ENCODE measurements at regions of chr21 and their contacts with region 1.

Region 1: DNA sequence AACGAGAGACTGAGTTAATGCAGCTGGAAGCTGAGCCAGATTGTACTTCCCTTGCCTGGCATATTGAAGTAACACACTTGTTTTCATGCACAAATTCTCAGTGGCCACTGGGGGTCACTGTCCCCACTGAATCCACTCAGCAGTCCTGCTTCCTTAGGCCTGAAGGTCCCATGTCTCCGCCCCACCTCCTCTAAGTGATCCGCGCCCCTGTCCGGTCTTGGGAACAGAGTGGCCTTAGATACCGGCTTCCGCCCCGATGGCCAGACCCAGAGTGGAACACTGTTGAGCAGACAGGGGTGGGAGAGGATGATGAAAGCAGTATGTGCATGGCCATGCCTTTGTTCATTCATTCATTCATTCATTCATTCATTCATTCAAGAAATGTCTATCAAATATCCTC is 34.8 kb downstream of the CHAF1B start:
- DNase-seq: peak; percentile 90
- H3K4me3 ChIP-seq: no peak overlapping the region
- H3K27ac ChIP-seq: peak overlapping the region; percentile 52
- H3K4me1 ChIP-seq: peaks cover 27% of the 10 kb centered on the region
- H3K27me3 ChIP-seq: no peaks in the 10 kb centered on the region
- CTCF ChIP-seq: peak; percentile 86

Region 2: DNA sequence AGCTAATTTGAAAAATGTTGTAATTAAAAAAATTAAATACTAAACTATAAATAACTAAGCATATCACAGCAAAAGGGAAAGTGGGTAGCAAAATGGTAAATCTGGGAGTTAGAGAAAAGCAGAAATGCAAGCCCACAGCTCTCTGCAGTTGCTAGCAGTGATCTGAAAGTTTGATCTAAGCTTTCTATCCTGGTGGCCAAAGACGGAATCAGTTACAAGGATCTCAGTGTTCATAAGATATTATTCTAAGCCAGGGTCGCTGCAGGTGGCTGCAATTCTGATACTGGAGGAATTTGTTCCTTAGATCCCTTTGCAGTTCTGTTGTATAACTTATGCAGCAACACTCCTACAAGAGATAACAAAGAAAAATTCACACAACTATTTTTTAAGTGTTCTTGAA is 723.4 kb before region 1 on chr21:
- CTCF ChIA-PET with region 1: no interaction called
- POLR2A ChIA-PET with region 1: no interaction called
- intact Hi-C with region 1: no loop called
- DNase-seq: no peak
- H3K4me3 ChIP-seq: no peak overlapping the region
- H3K27ac ChIP-seq: no peak overlapping the region
- H3K4me1 ChIP-seq: no peaks in the 10 kb centered on the region
- H3K27me3 ChIP-seq: peaks cover 42% of the 10 kb centered on the region
- CTCF ChIP-seq: no peak

Region 3: GRCh38 chr21:36288651-36289243 is 131.2 kb before region 1 on chr21:
- CTCF ChIA-PET with region 1: no interaction called
- POLR2A ChIA-PET with region 1: no interaction called
- intact Hi-C with region 1: no loop called
- DNase-seq: no peak
- H3K4me3 ChIP-seq: no peak overlapping the region
- H3K27ac ChIP-seq: no peak overlapping the region
- H3K4me1 ChIP-seq: no peaks in the 10 kb centered on the region
- H3K27me3 ChIP-seq: no peaks in the 10 kb centered on the region
- CTCF ChIP-seq: no peak

Region 4: GRCh38 chr21:36589355-36589971 is 169.5 kb after region 1 on chr21:
- CTCF ChIA-PET with region 1: no interaction called
- POLR2A ChIA-PET with region 1: no interaction called
- intact Hi-C with region 1: loop called (anchors 5 kb)
- DNase-seq: peak; percentile 81
- H3K4me3 ChIP-seq: no peak overlapping the region
- H3K27ac ChIP-seq: peak overlapping the region; percentile 4
- H3K4me1 ChIP-seq: peaks cover 8% of the 10 kb centered on the region
- H3K27me3 ChIP-seq: no peaks in the 10 kb centered on the region
- CTCF ChIP-seq: peak; percentile 83

Region 5: GRCh38 chr21:36706951-36707762 is 287.2 kb after region 1 on chr21:
- CTCF ChIA-PET with region 1: no interaction called
- POLR2A ChIA-PET with region 1: no interaction called
- intact Hi-C with region 1: loop called (anchors 5 kb)
- DNase-seq: peak; percentile 74
- H3K4me3 ChIP-seq: peak overlapping the region; percentile 12
- H3K27ac ChIP-seq: peak overlapping the region; percentile 92
- H3K4me1 ChIP-seq: peaks cover 45% of the 10 kb centered on the region
- H3K27me3 ChIP-seq: no peaks in the 10 kb centered on the region
- CTCF ChIP-seq: 0 out of 2 replicates have a peak, but pooled peaks have one; percentile 26

Measured in A673 (cell line).